Naive thymus-derived CD4-positive, alpha-beta T cell (primary cell): ENCODE measurements at regions of chr11 and their contacts with region 1.

Region 1: DNA sequence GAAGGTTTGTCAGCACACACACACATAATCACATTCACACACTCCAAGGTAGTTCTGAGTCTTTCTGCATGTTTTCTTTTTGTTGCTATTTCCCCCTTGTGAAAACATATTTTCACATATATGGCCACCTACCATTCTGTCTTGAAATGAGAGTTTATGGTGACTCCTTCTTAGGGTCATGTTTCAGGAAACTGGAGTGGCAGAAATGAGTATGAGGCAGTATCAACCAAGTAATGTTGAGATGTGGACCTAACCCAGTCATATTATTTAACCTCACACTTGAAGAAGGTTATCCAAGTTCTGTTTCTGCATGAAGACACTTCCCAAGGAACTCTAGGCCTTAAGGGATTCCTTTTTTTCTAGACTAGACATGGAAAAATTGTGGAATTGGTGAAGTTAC is 481.4 kb downstream of the ETS1 start:
- DNase-seq: no peak
- ATAC-seq: no peak
- H3K4me3 ChIP-seq: no peak overlapping the region
- H3K4me3 Mint-ChIP-seq: no peak overlapping the region
- H3K27ac ChIP-seq: no peak overlapping the region
- H3K27ac Mint-ChIP-seq: no peak overlapping the region
- H3K4me1 ChIP-seq: no peaks in the 10 kb centered on the region
- H3K4me1 Mint-ChIP-seq: peaks cover 2 to 18% (median 11%) of the 10 kb centered on the region in 7 donors
- H3K27me3 ChIP-seq: no peaks in the 10 kb centered on the region
- H3K27me3 Mint-ChIP-seq: peaks cover 0 to 10% (median 0%) of the 10 kb centered on the region in 5 donors

Region 2: DNA sequence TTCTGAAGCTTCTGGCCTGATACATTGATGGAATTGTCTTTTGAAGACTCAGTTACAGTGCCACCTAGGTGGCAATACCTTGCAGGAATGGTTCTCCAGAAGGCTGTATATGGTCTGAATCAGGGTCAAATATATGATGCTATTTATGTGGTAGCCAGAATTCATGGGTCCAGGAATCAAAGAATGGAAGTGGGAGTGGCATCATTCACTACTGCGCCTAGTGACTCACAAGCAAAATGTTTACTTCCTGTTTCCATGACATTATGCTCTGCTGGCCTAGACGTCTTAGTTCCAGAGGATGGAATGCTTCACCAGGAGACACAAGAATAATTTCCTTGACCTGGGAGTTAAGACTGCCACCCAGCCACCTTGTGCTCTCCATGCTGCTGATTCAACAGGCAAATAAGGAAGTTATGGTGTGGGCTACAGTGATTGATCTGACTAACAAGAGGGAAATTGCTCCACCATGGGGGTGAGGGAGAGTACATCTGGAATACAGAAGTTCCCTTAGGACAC is 10.4 kb before region 1 on chr11:
- CTCF ChIA-PET with region 1: no interaction called
- POLR2A ChIA-PET with region 1: no interaction called
- intact Hi-C with region 1: no loop called
- DNase-seq: no peak
- ATAC-seq: peak; percentile 32
- H3K4me3 ChIP-seq: no peak overlapping the region
- H3K4me3 Mint-ChIP-seq: no peak overlapping the region
- H3K27ac ChIP-seq: no peak overlapping the region
- H3K27ac Mint-ChIP-seq: no peak overlapping the region
- H3K4me1 ChIP-seq: no peaks in the 10 kb centered on the region
- H3K4me1 Mint-ChIP-seq: peaks cover 0 to 8% (median 5%) of the 10 kb centered on the region in 7 donors
- H3K27me3 ChIP-seq: no peaks in the 10 kb centered on the region
- H3K27me3 Mint-ChIP-seq: peaks cover 0 to 3% (median 0%) of the 10 kb centered on the region in 5 donors

Region 3: GRCh38 chr11:128125723-128126122 is 19.8 kb after region 1 on chr11:
- CTCF ChIA-PET with region 1: no interaction called
- POLR2A ChIA-PET with region 1: no interaction called
- intact Hi-C with region 1: loop called in 1 of 2 experiments (anchors 2 kb)
- DNase-seq: no peak
- ATAC-seq: no peak
- H3K4me3 ChIP-seq: no peak overlapping the region
- H3K4me3 Mint-ChIP-seq: no peak overlapping the region
- H3K27ac ChIP-seq: no peak overlapping the region
- H3K27ac Mint-ChIP-seq: no peak overlapping the region
- H3K4me1 ChIP-seq: no peaks in the 10 kb centered on the region
- H3K4me1 Mint-ChIP-seq: peaks cover 0 to 8% (median 2%) of the 10 kb centered on the region in 7 donors
- H3K27me3 ChIP-seq: no peaks in the 10 kb centered on the region
- H3K27me3 Mint-ChIP-seq: no peaks in the 10 kb centered on the region

Region 4: DNA sequence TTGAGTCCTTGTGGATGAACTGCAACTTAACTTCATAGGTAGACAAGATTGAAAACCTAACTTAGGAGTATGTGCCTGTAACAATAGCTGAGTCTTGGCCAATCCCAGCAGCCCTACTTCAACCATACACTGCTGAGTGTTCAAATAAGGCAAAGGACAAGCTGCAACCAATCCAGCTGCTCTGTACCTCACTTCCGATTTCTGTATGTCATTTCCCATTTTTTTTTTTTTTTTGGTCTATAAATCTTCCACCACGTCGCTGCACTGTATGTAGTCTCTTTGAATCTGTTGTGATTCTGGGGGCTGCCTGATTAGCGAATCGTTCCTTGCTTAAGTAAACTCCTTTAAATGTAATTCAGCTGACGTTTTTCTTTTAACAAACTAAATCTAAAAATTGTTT is 552.6 kb after region 1 on chr11:
- CTCF ChIA-PET with region 1: no interaction called
- POLR2A ChIA-PET with region 1: no interaction called
- intact Hi-C with region 1: no loop called
- DNase-seq: no peak
- ATAC-seq: peak; percentile 69
- H3K4me3 ChIP-seq: no peak overlapping the region
- H3K4me3 Mint-ChIP-seq: no peak overlapping the region
- H3K27ac ChIP-seq: no peak overlapping the region
- H3K27ac Mint-ChIP-seq: no peak overlapping the region
- H3K4me1 ChIP-seq: no peaks in the 10 kb centered on the region
- H3K4me1 Mint-ChIP-seq: peaks cover 3 to 12% (median 7%) of the 10 kb centered on the region in 7 donors
- H3K27me3 ChIP-seq: no peaks in the 10 kb centered on the region
- H3K27me3 Mint-ChIP-seq: peaks cover 0 to 57% (median 8%) of the 10 kb centered on the region in 5 donors